ENCODE measurements at regions of chr12 and their contacts with region 1.

Region 1: DNA sequence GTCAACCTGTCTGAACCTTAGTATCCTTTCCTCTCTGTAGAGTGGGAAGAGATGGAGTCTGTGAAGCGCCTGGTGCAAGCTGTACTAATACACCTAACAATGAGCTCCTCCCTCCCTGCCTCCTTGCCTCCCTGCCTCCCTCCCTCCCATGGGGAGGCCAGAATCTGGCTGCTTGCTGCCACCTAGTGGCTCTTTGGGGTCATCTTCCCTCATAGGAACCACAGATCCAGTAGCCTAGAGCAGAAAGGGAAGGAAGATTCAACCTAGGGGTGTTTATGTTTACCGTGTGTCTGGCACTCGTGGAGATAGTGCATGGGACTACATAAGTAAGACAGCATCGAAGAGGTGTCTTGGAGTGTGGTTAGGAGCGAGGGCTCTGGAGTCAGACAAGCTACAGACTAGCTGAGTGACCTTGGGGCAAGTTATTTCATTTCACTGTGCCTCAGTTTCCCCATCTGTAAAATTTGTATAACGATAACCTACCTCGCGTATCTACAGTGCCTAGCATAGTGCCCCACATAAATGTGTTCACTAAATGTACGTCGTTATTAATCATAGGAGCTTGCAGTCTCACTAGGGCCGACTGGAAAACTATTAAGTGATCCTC is 35.5 kb upstream of the TSPAN9 start:
- ATAC-seq: peak; percentile 85 to 99 (median 90)
- H3K4me3 ChIP-seq: no peak overlapping the region
- H3K27ac ChIP-seq: no peak overlapping the region
- H3K4me1 ChIP-seq: no peaks in the 10 kb centered on the region

Region 2: DNA sequence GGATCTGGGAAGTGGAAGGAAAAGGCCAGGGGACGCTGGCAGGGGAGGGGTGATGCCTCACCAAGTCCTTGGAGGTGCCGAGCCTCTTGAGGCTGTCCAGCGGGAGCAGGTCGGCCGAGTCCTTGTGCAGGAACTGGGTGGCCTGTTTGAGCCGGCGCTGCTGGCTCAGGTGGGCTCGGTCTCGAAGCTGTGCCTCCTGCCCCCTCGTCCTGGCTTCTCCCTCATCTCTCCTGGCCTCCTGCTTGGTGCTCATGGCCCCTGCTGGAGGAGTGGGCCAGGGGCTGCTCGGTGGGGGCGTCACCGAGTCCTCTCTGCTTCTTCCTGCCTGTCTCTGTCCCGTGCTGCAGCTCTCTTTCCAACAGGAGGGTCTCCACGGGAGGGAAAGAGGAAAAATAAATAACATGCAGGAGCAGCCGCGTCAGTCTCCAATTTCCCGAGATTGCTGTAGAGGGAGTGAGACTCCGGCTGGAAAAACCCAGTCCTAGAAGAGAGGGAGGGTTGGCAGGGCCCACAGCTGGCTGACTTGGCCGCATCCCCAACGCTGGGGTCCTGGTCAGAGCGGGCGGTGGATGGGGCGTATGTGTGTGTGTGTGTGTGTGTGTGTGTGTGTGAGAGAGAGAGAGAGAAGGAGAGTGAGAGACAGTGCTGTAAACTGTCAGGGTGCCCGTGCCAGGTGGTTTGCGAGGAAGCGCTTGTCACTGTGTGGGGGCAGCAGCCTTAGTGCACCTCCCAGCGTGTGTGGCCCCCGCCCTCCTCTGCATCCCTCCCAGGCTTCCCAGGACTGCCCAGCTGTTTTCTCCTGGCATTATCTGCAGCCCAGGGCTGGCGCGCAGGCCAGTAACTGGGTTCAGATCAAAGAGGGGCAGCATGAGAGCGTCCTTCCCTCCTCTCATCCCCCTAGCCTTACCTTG is 206.8 kb before region 1 on chr12 and contains the start of gene NRIP2:
- in situ Hi-C with region 1: loop called in 1 of 9 experiments (anchors 25 kb)
- ATAC-seq: peak; percentile 73 to 98 (median 97)
- H3K4me3 ChIP-seq: no peak within 1 kb of the TSS
- H3K27ac ChIP-seq: peak within 1 kb of the TSS in 1 of 2 donors; percentile 36
- H3K4me1 ChIP-seq: peaks cover 12 to 16% of the 10 kb centered on the region in 2 donors
- total RNA-seq, gene NRIP2: 1.00 to 4.1 (median 1.7) TPM

Region 3: DNA sequence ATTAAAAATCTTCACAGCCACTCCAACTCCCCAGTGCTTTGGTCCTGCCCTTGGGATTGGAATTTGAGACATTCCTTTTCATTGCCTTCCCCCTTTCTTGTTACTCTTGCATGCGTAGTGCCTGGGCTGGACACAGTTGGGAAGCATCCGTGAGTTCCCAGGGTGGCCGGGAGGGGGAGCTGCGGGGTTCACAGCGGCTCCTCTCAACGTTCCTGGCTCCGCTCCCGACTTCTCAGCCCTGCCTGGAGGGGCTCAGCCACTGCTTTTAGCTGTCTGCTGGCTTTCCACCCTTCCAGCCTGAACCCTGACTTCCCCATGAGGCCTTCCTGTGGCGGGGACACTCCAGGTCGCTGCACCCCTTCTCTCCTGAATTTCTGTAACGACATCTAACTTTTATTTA is 188.0 kb before region 1 on chr12:
- in situ Hi-C with region 1: loop called in 5 of 9 experiments (anchors 25 kb)
- ATAC-seq: peak; percentile 80 to 98 (median 89)
- H3K4me3 ChIP-seq: no peak overlapping the region
- H3K27ac ChIP-seq: no peak overlapping the region
- H3K4me1 ChIP-seq: peaks cover 0 to 5% of the 10 kb centered on the region in 2 donors

Measured in motor neuron (in vitro differentiated cells).